ENCODE measurements at regions of chr19 and their contacts with region 1.

Region 1: DNA sequence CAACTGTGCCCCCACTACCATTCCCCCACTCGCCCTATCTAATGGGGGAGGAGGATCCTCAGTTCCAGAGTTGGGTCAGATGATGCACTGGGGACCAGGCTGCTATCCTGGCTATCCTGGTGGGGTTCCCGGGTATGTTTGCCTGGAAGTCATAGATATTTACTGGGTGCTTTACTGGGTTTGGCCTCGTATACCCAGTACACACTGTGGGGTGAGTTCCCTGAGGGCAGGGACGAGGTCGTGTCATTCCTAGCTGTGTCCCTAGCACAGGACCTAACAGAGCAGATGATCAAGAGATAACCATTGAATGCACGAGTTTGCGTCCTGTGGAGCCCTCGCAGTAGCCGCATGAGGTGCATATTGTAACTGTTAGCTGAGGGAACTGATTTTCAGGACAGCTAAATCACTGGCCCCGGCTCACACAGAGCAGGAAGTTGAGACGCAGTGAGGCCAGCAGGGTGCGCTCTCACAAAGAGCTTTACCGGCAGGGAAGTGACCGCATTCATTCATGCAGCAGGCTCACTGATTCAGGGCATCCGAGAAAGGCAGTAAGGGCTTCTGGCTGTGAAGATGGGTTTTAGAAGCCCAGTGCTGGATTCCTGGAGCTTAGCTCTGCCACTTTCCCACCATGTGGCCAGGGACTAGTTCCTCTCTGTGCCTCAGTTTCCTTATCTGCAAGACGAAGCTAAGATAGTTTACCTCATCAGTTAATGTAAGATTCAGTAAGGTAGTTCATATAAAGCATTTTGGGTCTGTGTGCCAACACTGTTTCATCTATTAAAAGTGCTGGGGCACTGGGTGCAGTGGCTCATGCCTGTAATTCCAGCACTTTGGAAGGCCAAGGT is 6.0 kb downstream of the RUVBL2 start:
- DNase-seq: peak; percentile 42 to 66 (median 61)
- ATAC-seq: peak; percentile 94
- H3K4me3 ChIP-seq: no peak overlapping the region
- H3K4me3 Mint-ChIP-seq: no peak overlapping the region
- H3K27ac ChIP-seq: no peak overlapping the region
- H3K27ac Mint-ChIP-seq: peak overlapping the region in 1 of 9 donors; percentile 31
- H3K4me1 ChIP-seq: peaks cover 4% of the 10 kb centered on the region in 2 donors
- H3K4me1 Mint-ChIP-seq: peaks cover 13 to 28% (median 20%) of the 10 kb centered on the region in 7 donors
- H3K27me3 ChIP-seq: no peaks in the 10 kb centered on the region
- H3K27me3 Mint-ChIP-seq: no peaks in the 10 kb centered on the region

Region 2: GRCh38 chr19:49017666-49018351 is 18.1 kb after region 1 on chr19:
- CTCF ChIA-PET with region 1: interaction called, 11 read pairs
- POLR2A ChIA-PET with region 1: no interaction called
- intact Hi-C with region 1: no loop called
- DNase-seq: peak; percentile 49 to 71 (median 67)
- ATAC-seq: peak; percentile 91
- H3K4me3 ChIP-seq: peak overlapping the region; percentile 76
- H3K4me3 Mint-ChIP-seq: peak overlapping the region; percentile 78 to 95 (median 90)
- H3K27ac ChIP-seq: peak overlapping the region; percentile 48
- H3K27ac Mint-ChIP-seq: peak overlapping the region in 3 of 9 donors; percentile 28 to 45 (median 42)
- H3K4me1 ChIP-seq: peaks cover 0 to 4% of the 10 kb centered on the region in 2 donors
- H3K4me1 Mint-ChIP-seq: peaks cover 7 to 22% (median 18%) of the 10 kb centered on the region in 7 donors
- H3K27me3 ChIP-seq: no peaks in the 10 kb centered on the region
- H3K27me3 Mint-ChIP-seq: peaks cover 0 to 22% (median 0%) of the 10 kb centered on the region in 5 donors

Region 3: DNA sequence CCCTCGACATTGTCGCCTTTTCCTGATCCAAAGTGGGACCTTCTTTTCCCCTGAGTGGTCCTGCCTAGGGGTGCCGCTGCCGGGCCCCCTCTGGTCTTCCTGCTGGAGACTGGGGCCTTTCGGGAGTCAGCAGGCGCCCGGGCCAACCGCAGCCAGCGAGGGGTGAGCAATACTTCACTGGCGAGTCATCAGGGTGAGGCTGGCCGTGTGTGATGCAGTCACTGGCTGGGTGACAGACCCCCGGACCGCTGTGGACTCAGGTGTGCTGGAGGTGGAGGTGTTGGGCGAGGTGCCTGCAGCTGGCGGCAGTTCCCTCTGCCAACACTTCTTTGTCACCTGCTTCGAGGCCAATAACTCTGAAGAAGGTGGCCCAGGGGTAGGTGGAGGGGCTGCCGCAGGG is 42.5 kb after region 1 on chr19:
- CTCF ChIA-PET with region 1: no interaction called
- POLR2A ChIA-PET with region 1: no interaction called
- intact Hi-C with region 1: no loop called
- DNase-seq: no peak
- ATAC-seq: no peak
- H3K4me3 ChIP-seq: no peak overlapping the region
- H3K4me3 Mint-ChIP-seq: no peak overlapping the region
- H3K27ac ChIP-seq: no peak overlapping the region
- H3K27ac Mint-ChIP-seq: no peak overlapping the region
- H3K4me1 ChIP-seq: no peaks in the 10 kb centered on the region
- H3K4me1 Mint-ChIP-seq: no peaks in the 10 kb centered on the region
- H3K27me3 ChIP-seq: no peaks in the 10 kb centered on the region
- H3K27me3 Mint-ChIP-seq: no peaks in the 10 kb centered on the region

Region 4: DNA sequence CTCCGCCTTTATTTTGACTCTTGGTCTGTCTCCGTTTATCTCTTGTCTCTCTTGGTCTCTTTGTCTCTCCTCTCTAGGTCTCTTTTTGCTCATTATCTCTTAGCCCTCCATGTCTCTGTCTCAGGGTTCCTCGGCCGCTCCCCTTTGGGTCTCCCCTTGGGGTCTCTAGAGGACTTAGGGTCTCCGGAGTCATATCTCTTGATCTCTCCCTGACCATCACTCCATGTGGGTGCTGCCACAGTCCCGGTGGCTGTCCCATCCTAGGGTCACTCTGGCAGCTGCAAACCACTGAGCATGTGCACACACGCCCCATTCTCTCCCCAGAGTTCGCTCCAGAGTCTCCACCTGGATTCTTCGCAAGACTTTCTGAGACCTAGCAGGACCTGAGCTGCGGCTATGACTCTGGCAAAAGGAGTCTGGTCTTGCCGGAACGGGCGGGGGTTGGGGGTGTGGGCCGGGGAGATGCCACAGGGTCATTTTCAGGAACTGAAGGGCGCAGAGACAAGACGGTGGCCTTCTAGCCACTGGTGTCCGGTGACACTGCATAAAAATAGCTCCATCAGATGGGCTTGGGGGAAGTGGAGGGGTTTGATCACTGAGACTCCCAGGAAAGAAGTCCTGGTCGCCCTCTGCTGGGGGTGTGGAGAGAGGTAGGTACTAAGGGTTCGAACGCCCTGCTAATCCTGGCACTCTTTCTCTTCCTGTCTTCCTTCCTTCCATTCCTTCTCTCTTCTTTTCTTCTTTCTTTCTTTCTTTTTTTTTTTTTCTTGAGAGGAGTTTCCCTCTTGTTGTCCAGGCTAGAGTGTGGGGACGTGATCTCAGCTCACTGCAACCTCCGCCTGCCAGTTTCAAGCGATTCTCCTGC is 74.0 kb after region 1 on chr19:
- CTCF ChIA-PET with region 1: interaction called, 3 read pairs
- POLR2A ChIA-PET with region 1: no interaction called
- intact Hi-C with region 1: loop called in 1 of 2 experiments (anchors 5 kb)
- DNase-seq: no peak
- ATAC-seq: no peak
- H3K4me3 ChIP-seq: no peak overlapping the region
- H3K4me3 Mint-ChIP-seq: peak overlapping the region; percentile 11 to 82 (median 72)
- H3K27ac ChIP-seq: no peak overlapping the region
- H3K27ac Mint-ChIP-seq: peak overlapping the region in 3 of 9 donors; percentile 4 to 62 (median 7)
- H3K4me1 ChIP-seq: no peaks in the 10 kb centered on the region
- H3K4me1 Mint-ChIP-seq: peaks cover 7 to 20% (median 13%) of the 10 kb centered on the region in 7 donors
- H3K27me3 ChIP-seq: peaks cover 4 to 12% of the 10 kb centered on the region in 2 donors
- H3K27me3 Mint-ChIP-seq: peaks cover 48 to 73% (median 53%) of the 10 kb centered on the region in 5 donors

Region 5: GRCh38 chr19:49200238-49200862 is 200.6 kb after region 1 on chr19:
- CTCF ChIA-PET with region 1: no interaction called
- POLR2A ChIA-PET with region 1: no interaction called
- intact Hi-C with region 1: loop called in 1 of 2 experiments (anchors 2 kb)
- DNase-seq: no peak
- ATAC-seq: no peak
- H3K4me3 ChIP-seq: no peak overlapping the region
- H3K4me3 Mint-ChIP-seq: no peak overlapping the region
- H3K27ac ChIP-seq: no peak overlapping the region
- H3K27ac Mint-ChIP-seq: no peak overlapping the region
- H3K4me1 ChIP-seq: no peaks in the 10 kb centered on the region
- H3K4me1 Mint-ChIP-seq: peaks cover 0 to 9% (median 0%) of the 10 kb centered on the region in 7 donors
- H3K27me3 ChIP-seq: no peaks in the 10 kb centered on the region
- H3K27me3 Mint-ChIP-seq: peaks cover 0 to 3% (median 0%) of the 10 kb centered on the region in 5 donors

Measured in naive thymus-derived CD4-positive, alpha-beta T cell (primary cell).